ENCODE measurements at regions of chr10 and their contacts with region 1.

Region 1: DNA sequence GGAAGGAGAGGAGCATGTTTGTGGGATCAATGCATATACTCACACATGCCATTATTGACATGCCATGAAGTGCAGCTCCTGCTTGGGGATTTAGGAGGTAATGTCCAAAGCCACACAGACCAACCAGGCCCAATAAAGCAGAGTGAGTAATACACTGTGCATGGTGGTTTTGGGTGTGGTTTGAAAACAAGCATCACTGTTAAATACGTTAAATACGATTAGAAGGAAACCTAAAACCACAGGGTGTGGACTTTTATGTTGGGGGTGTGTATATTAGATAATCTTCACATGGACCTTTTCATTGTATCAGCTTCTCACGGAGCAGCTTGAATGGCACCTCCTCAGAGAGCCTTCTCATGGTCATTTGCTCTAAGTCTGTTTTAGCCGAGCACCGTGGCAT is 10.4 kb upstream of the EIF3A start:
- DNase-seq: peak; percentile 44 to 91
- H3K4me3 ChIP-seq: no peak overlapping the region
- H3K27ac ChIP-seq: peak overlapping the region; percentile 37
- H3K4me1 ChIP-seq: peaks cover 8% of the 10 kb centered on the region
- H3K27me3 ChIP-seq: no peaks in the 10 kb centered on the region
- CTCF ChIP-seq: no peak

Region 2: GRCh38 chr10:118754720-118755480 is 336.1 kb before region 1 on chr10 and contains the start of gene CACUL1:
- CTCF ChIA-PET with region 1: no interaction called
- POLR2A ChIA-PET with region 1: no interaction called
- intact Hi-C with region 1: loop called (anchors 10 kb)
- DNase-seq: peak; percentile 91 to 98
- H3K4me3 ChIP-seq: peak within 1 kb of the TSS; percentile 96
- H3K27ac ChIP-seq: peak within 1 kb of the TSS; percentile 69
- H3K4me1 ChIP-seq: peaks cover 10% of the 10 kb centered on the region; the same call in 1 of the 2 replicates
- H3K27me3 ChIP-seq: no peaks in the 10 kb centered on the region
- CTCF ChIP-seq: no peak
- total RNA-seq, gene CACUL1: 49.4 and 62.5 TPM in 2 replicates

Region 3: DNA sequence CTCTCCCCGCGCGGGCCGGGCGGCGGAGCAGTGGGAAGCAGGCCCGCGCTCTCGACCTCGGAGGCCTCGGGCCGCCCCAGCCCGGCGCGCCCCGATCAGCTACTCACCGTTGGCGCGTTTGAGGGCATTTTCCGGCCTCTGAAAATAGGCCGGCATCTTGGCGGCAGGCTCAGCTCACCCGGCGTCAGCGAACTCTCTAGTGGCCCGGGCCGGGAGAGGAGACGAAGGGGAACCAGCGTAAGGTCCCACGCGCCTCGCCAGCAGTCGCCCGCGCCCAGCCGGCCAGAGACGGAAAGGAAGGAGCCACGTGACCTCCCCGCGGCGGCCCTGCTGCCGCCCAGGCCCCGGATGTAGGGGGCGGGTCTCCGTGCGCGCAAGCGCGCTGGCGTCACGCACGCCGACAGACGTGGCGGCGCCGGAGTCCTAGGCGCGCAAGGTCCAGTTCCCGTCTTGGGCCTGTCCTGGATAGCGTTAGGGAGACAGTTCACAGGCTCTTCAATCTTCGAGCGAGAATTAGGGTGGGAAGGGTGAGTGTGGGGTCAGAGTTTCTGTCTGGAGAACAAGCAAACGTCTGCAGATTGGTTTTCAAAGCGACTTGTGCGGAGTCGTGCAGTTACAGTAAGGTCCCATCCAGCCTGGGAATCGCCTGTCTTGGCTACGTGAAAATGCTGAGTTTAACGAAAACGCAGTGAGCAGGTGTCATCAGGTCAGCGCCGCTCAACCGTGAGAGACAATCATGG is 10.3 kb before region 1 on chr10 and contains the start of gene EIF3A:
- CTCF ChIA-PET with region 1: interaction called, 13 read pairs
- POLR2A ChIA-PET with region 1: no interaction called
- intact Hi-C with region 1: no loop called
- DNase-seq: peak; percentile 69 to 87
- H3K4me3 ChIP-seq: peak within 1 kb of the TSS; percentile 84
- H3K27ac ChIP-seq: peak within 1 kb of the TSS; percentile 78
- H3K4me1 ChIP-seq: peaks cover 10% of the 10 kb centered on the region
- H3K27me3 ChIP-seq: no peaks in the 10 kb centered on the region
- CTCF ChIP-seq: no peak
- total RNA-seq, gene EIF3A: 85.5 and 102 TPM in 2 replicates

Region 4: GRCh38 chr10:119103903-119104652 is 13.1 kb after region 1 on chr10 and contains the start of gene DENND10:
- CTCF ChIA-PET with region 1: no interaction called
- POLR2A ChIA-PET with region 1: interaction called, 4 read pairs
- intact Hi-C with region 1: loop called (anchors 1 kb)
- DNase-seq: peak in 1 of 2 experiments; percentile 56
- H3K4me3 ChIP-seq: peak within 1 kb of the TSS; percentile 74
- H3K27ac ChIP-seq: no peak within 1 kb of the TSS
- H3K4me1 ChIP-seq: peaks cover 25% of the 10 kb centered on the region
- H3K27me3 ChIP-seq: no peaks in the 10 kb centered on the region
- CTCF ChIP-seq: no peak
- total RNA-seq, gene DENND10: 30.1 and 31.8 TPM in 2 replicates

Region 5: DNA sequence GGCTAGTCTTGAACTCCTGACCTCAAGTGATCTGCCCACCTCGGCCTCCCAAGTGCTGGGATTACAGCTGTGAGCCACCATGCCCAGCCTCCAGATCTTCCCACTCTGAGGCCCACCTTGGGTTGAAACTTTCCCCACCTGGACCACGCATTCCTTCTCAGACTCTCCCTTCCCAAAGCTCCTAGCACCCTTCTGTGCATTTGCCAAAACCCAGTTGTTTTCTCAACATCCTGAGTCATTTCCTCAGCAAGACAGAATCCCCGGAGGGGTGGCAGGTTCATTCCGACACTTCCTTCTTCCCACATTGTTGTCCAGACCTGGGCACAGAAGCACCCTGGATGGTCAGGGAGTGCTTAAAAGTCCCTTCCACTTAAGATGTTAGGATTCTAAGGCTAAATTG is 589.1 kb after region 1 on chr10:
- CTCF ChIA-PET with region 1: no interaction called
- POLR2A ChIA-PET with region 1: no interaction called
- intact Hi-C with region 1: loop called (anchors 5 kb)
- DNase-seq: peak; percentile 66 to 88
- H3K4me3 ChIP-seq: no peak overlapping the region; the same call in 1 of the 2 replicates
- H3K27ac ChIP-seq: peak overlapping the region; percentile 99
- H3K4me1 ChIP-seq: peaks cover 69% of the 10 kb centered on the region
- H3K27me3 ChIP-seq: no peaks in the 10 kb centered on the region
- CTCF ChIP-seq: no peak

Measured in PC-9 (cell line).